PC-9 (cell line): ENCODE measurements at regions of chr21 and their contacts with region 1.

Region 1: DNA sequence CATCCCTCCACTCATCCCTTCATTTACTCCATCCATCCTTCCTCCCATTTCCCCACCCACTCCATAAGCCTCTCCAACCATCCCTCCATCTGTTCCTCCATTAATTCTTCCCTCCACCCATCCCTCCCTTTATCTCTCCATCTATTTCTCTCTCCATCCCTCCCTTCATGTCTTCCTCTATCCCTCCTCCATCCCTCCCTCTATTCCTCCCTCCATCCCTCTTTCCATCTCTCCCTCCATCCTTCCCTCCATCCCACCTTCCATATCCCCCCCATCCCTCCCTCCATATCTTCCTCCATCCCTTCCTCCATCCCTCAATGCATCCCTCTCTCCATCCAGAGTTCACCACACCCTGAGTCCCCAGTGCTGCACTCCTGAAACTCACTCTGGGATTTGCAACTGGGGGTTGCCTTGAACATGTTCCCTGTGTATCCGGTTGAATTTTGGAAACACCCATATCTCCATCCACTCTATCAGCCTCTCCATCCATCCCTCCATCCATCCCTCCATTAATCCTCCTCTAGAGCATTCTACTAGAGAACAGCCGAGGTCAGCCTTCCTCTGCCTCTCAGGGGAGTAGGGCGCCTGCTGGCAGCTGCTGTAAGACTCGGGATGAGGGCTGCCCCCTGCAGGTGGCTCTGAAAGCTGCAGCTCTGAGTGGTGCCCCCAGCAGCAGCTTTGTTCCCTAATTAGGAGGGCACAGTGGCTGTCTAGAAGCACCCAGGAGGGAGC is 39.4 kb downstream of the ABCG1 start:
- DNase-seq: peak in 1 of 2 experiments; percentile 41
- H3K4me3 ChIP-seq: no peak overlapping the region
- H3K27ac ChIP-seq: no peak overlapping the region
- H3K4me1 ChIP-seq: no peaks in the 10 kb centered on the region
- H3K27me3 ChIP-seq: no peaks in the 10 kb centered on the region
- CTCF ChIP-seq: peak; percentile 83

Region 2: GRCh38 chr21:42145569-42146272 is 112.6 kb before region 1 on chr21:
- CTCF ChIA-PET with region 1: no interaction called
- POLR2A ChIA-PET with region 1: no interaction called
- intact Hi-C with region 1: loop called (anchors 1 kb)
- DNase-seq: peak in 1 of 2 experiments; percentile 44
- H3K4me3 ChIP-seq: no peak overlapping the region
- H3K27ac ChIP-seq: no peak overlapping the region
- H3K4me1 ChIP-seq: no peaks in the 10 kb centered on the region
- H3K27me3 ChIP-seq: no peaks in the 10 kb centered on the region
- CTCF ChIP-seq: peak; percentile 84

Region 3: DNA sequence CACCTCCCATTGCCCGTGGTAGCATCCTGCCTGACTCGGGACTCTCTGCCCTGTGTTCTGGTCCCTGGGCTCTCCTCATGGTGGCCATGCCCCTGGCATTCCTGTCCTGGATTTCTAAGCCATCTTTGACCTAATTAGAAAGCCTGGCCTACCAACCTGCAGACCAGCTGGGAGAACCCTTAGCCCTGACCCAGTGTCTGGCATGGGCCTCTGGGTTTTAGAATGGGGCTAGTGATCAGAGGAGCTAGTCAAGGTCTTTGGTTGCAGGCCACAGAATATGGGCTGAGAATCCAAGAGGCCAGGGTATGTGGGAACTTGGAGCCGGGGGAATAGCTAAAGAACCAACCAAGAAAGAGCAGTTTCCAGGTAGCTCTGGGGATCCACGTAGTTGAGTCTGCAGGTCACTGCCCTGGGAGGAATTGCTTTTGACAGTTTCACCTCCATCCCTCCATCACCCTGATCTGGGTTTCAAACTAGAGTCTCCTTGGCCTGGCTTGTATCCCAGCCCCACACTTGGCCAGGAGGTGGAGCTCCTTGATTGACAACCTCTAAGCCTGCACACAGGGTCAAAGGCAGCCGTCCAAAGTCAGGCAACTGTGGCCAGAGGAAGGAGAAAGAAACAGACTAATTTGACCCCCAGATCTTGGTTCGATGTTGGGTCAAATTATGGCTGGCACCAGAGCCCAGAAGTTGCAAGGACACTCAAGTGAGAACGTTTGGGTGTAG is 94.1 kb before region 1 on chr21:
- CTCF ChIA-PET with region 1: interaction called, 3 read pairs
- POLR2A ChIA-PET with region 1: no interaction called
- intact Hi-C with region 1: loop called (anchors 5 kb)
- DNase-seq: peak in 1 of 2 experiments; percentile 29
- H3K4me3 ChIP-seq: no peak overlapping the region
- H3K27ac ChIP-seq: no peak overlapping the region
- H3K4me1 ChIP-seq: no peaks in the 10 kb centered on the region
- H3K27me3 ChIP-seq: no peaks in the 10 kb centered on the region
- CTCF ChIP-seq: peak; percentile 71

Region 4: DNA sequence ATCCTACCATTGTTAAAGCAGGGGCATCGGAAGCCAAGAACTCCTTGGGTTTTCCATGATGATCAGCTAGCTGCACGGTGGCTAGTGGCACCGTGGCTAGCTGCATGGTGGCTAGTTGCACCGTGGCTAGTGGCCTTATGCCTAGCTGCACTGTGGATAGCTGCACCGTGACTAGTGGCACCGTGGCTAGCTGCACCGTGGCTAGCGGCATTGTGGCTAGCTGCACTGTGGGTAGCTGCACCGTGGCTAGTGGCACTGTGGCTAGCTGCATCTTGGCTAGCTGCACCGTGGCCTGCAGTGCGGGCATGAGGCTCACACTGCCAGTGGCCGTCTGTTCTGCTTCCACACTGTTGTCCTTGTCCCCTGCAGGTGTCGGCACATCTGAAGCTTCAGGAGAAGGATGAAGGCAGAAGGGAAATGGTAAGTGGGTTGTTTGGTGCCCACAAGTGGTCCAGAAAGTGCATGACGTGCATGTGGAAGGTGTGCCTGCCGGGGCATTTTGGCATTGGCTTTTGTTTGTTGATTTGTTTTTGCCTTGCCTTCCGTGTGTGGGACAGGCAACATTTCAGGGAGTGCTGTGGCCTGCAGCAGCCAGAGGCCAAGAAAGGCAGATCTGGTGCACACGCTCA is 18.3 kb after region 1 on chr21:
- CTCF ChIA-PET with region 1: no interaction called
- POLR2A ChIA-PET with region 1: no interaction called
- intact Hi-C with region 1: no loop called
- DNase-seq: no peak
- H3K4me3 ChIP-seq: no peak overlapping the region
- H3K27ac ChIP-seq: no peak overlapping the region
- H3K4me1 ChIP-seq: no peaks in the 10 kb centered on the region
- H3K27me3 ChIP-seq: no peaks in the 10 kb centered on the region
- CTCF ChIP-seq: no peak